ENCODE measurements at regions of chr15 and their contacts with region 1.

Region 1: GRCh38 chr15:90320061-90320884 is 31.8 kb upstream of the ZNF774 start:
- DNase-seq: peak; percentile 31 to 85 (median 64)
- ATAC-seq: peak; percentile 99
- H3K4me3 ChIP-seq: no peak overlapping the region
- H3K4me3 Mint-ChIP-seq: no peak overlapping the region
- H3K27ac ChIP-seq: no peak overlapping the region
- H3K27ac Mint-ChIP-seq: no peak overlapping the region
- H3K4me1 ChIP-seq: no peaks in the 10 kb centered on the region
- H3K4me1 Mint-ChIP-seq: peaks cover 5% of the 10 kb centered on the region
- H3K27me3 ChIP-seq: no peaks in the 10 kb centered on the region
- H3K27me3 Mint-ChIP-seq: peaks cover 3% of the 10 kb centered on the region
- CTCF ChIP-seq: peak; percentile 98

Region 2: GRCh38 chr15:90291679-90292356 is 28.5 kb before region 1 on chr15:
- CTCF ChIA-PET with region 1: interaction called, 13 read pairs
- POLR2A ChIA-PET with region 1: no interaction called
- intact Hi-C with region 1: no loop called
- DNase-seq: peak in 2 of 9 experiments; percentile 22 to 34
- ATAC-seq: no peak
- H3K4me3 ChIP-seq: no peak overlapping the region
- H3K4me3 Mint-ChIP-seq: no peak overlapping the region
- H3K27ac ChIP-seq: no peak overlapping the region
- H3K27ac Mint-ChIP-seq: no peak overlapping the region
- H3K4me1 ChIP-seq: no peaks in the 10 kb centered on the region
- H3K4me1 Mint-ChIP-seq: peaks cover 3% of the 10 kb centered on the region
- H3K27me3 ChIP-seq: no peaks in the 10 kb centered on the region
- H3K27me3 Mint-ChIP-seq: peaks cover 4% of the 10 kb centered on the region
- CTCF ChIP-seq: no peak

Region 3: GRCh38 chr15:90336705-90337141 is 16.4 kb after region 1 on chr15:
- CTCF ChIA-PET with region 1: interaction called, 13 read pairs
- POLR2A ChIA-PET with region 1: no interaction called
- intact Hi-C with region 1: no loop called
- DNase-seq: peak in 2 of 9 experiments; percentile 32 to 37
- ATAC-seq: peak; percentile 67
- H3K4me3 ChIP-seq: no peak overlapping the region
- H3K4me3 Mint-ChIP-seq: no peak overlapping the region
- H3K27ac ChIP-seq: no peak overlapping the region
- H3K27ac Mint-ChIP-seq: no peak overlapping the region
- H3K4me1 ChIP-seq: peaks cover 13% of the 10 kb centered on the region
- H3K4me1 Mint-ChIP-seq: peaks cover 9% of the 10 kb centered on the region
- H3K27me3 ChIP-seq: no peaks in the 10 kb centered on the region
- H3K27me3 Mint-ChIP-seq: no peaks in the 10 kb centered on the region
- CTCF ChIP-seq: no peak

Region 4: DNA sequence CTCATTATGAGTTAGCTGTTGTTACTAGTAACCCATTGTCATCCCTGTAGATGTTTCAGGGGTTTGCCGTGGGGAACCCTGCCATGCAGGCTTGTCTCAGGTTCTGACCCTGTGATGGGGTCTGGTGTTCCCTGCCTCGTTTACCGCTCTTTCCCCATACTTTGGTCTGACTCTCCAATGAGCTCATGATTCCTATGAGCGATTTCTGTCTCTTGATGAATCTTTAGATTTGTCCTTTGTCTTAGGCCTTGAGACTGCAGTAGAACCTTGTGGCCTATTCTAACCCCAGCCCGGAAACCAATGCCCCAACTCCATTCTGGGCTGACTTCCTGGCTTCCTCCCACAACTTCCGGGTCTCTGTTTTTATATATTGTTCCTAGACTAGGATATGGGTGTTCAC is 56.5 kb after region 1 on chr15:
- CTCF ChIA-PET with region 1: interaction called, 15 read pairs
- POLR2A ChIA-PET with region 1: no interaction called
- intact Hi-C with region 1: no loop called
- DNase-seq: peak; percentile 38 to 87 (median 69)
- ATAC-seq: peak; percentile 97
- H3K4me3 ChIP-seq: peak overlapping the region in 1 of 2 experiments; percentile 12
- H3K4me3 Mint-ChIP-seq: peak overlapping the region; percentile 63
- H3K27ac ChIP-seq: peak overlapping the region in 1 of 2 experiments; percentile 62
- H3K27ac Mint-ChIP-seq: peak overlapping the region; percentile 12
- H3K4me1 ChIP-seq: peaks cover 40% of the 10 kb centered on the region
- H3K4me1 Mint-ChIP-seq: peaks cover 50% of the 10 kb centered on the region
- H3K27me3 ChIP-seq: no peaks in the 10 kb centered on the region
- H3K27me3 Mint-ChIP-seq: no peaks in the 10 kb centered on the region
- CTCF ChIP-seq: no peak

Region 5: DNA sequence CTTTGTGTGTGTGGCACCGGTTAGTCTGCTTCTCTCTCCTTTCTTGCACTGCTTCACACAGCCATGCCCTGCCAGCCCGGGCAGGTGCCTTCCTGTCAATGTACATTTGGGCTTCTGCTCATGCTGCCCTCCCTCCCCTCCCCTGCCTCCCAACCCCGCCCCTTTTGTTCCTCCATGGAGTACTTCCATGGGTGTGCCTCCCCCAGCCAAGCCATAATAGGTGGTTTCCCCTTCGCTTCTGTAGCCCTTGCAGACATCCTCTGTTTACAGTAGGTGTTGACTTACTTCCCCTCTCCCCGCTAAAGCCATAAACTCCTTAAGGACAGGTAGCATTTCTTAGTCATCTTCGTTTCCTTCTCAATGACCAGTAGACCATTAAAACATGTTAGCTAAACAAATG is 177.6 kb after region 1 on chr15:
- CTCF ChIA-PET with region 1: interaction called, 12 read pairs
- POLR2A ChIA-PET with region 1: no interaction called
- intact Hi-C with region 1: no loop called
- DNase-seq: no peak
- ATAC-seq: no peak
- H3K4me3 ChIP-seq: no peak overlapping the region
- H3K4me3 Mint-ChIP-seq: no peak overlapping the region
- H3K27ac ChIP-seq: no peak overlapping the region
- H3K27ac Mint-ChIP-seq: no peak overlapping the region
- H3K4me1 ChIP-seq: peaks cover 16% of the 10 kb centered on the region
- H3K4me1 Mint-ChIP-seq: peaks cover 15% of the 10 kb centered on the region
- H3K27me3 ChIP-seq: no peaks in the 10 kb centered on the region
- H3K27me3 Mint-ChIP-seq: no peaks in the 10 kb centered on the region
- CTCF ChIP-seq: no peak

Region 6: DNA sequence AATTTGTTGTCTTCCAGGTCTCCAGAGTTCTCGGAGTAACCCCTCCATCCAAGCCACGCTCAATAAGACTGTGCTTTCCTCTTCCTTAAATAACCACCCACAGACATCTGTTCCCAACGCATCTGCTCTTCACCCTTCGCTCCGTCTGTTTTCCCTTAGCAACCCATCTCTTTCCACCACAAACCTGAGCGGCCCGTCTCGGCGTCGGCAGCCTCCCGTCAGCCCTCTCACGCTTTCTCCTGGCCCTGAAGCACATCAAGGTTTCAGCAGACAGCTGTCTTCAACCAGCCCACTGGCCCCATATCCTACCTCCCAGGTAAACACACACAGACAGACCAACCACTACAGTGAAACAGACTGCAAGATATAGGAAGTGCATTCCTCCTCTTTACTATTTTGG is 308.9 kb after region 1 on chr15:
- CTCF ChIA-PET with region 1: no interaction called
- POLR2A ChIA-PET with region 1: no interaction called
- intact Hi-C with region 1: loop called in 1 of 2 experiments (anchors 5 kb)
- DNase-seq: no peak
- ATAC-seq: no peak
- H3K4me3 ChIP-seq: no peak overlapping the region
- H3K4me3 Mint-ChIP-seq: no peak overlapping the region
- H3K27ac ChIP-seq: no peak overlapping the region
- H3K27ac Mint-ChIP-seq: peak overlapping the region; percentile 34
- H3K4me1 ChIP-seq: no peaks in the 10 kb centered on the region
- H3K4me1 Mint-ChIP-seq: no peaks in the 10 kb centered on the region
- H3K27me3 ChIP-seq: no peaks in the 10 kb centered on the region
- H3K27me3 Mint-ChIP-seq: no peaks in the 10 kb centered on the region
- CTCF ChIP-seq: no peak